ENCODE measurements at regions of chr11 and their contacts with region 1.

Region 1: GRCh38 chr11:35822815-35823495 is 120.9 kb upstream of the LDLRAD3 start:
- DNase-seq: no peak
- H3K4me3 ChIP-seq: no peak overlapping the region
- H3K27ac ChIP-seq: no peak overlapping the region
- H3K4me1 ChIP-seq: peaks cover 8% of the 10 kb centered on the region
- H3K27me3 ChIP-seq: no peaks in the 10 kb centered on the region
- CTCF ChIP-seq: no peak
- POLR2A ChIP-seq: no peak

Region 2: DNA sequence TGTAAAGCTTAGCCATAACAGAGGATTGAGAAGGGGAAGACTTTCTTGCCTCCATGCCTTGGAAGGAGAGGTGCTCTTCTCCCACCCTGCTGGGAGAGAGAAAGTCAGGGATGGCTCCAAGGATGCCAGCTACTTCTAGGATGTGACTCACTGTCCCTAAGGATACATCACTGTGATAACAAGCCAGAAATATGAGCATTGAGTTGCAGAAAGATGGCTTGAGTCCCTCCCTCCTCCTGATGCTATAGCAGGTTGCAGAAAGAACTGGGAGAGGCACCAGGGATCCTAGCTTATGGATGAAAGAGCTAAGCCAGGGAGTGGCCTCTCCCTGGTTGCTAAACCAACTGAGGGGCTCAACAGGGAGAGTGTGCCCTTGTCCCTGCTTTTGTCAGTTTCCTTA is 232.5 kb before region 1 on chr11:
- CTCF ChIA-PET with region 1: no interaction called
- POLR2A ChIA-PET with region 1: no interaction called
- dilution Hi-C with region 1: no loop called
- intact Hi-C with region 1: no loop called
- DNase-seq: no peak
- H3K4me3 ChIP-seq: no peak overlapping the region
- H3K27ac ChIP-seq: no peak overlapping the region
- H3K4me1 ChIP-seq: no peaks in the 10 kb centered on the region
- H3K27me3 ChIP-seq: peaks cover 12 to 16% of the 10 kb centered on the region in 2 experiments
- CTCF ChIP-seq: no peak
- POLR2A ChIP-seq: no peak

Region 3: DNA sequence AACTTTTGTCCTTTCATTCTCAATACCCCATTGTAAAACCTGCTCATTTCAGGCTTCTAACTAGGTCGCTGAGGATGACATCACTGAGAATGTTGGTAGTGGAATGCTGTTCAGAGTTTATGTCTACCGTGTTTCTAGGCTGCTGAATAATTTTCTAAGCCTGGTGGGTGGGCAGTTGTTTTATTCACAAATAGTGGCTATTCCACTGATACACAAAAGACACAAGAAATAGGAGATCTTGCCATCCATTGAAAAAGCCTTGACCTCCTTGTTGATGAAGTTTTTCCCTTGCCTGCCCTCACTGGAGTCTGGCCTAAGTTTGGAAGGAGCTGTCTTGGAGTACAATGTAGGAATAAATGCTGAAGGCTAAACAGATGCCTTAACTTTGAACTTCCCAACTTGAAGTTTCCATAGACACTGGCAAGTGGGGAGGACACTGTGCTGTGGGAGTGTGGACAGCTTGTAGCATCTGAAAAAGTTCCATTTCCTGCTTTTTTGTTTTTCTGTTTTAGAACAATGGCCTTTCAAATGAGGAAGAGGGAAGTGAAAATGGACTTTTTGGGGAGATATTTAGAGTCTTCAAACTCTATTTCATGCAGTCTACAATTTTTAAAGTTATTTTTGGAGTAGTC is 101.2 kb before region 1 on chr11:
- CTCF ChIA-PET with region 1: interaction called, 14 read pairs
- POLR2A ChIA-PET with region 1: no interaction called
- dilution Hi-C with region 1: no loop called
- intact Hi-C with region 1: no loop called
- DNase-seq: no peak
- H3K4me3 ChIP-seq: no peak overlapping the region
- H3K27ac ChIP-seq: no peak overlapping the region
- H3K4me1 ChIP-seq: no peaks in the 10 kb centered on the region
- H3K27me3 ChIP-seq: no peaks in the 10 kb centered on the region
- CTCF ChIP-seq: no peak
- POLR2A ChIP-seq: no peak

Region 4: DNA sequence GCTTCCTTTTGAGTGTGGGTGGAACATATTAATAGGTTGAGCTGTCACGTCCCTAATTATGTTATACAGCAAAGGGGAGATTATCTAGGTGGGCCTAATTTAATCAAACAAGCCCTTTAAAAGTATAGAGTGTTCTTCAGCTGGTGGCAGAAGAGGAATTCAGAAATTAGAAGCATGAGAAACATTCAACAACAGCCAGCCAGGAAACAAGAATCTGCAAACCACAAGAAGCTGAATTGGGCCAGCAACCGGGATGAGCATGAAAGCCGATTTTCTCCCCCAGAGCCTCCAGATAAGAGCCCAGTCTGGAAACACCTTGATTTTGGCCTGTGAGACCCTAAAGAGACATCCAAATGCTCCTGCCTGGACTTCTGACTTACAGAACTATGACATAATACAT is 15.1 kb after region 1 on chr11:
- CTCF ChIA-PET with region 1: interaction called, 78 read pairs
- POLR2A ChIA-PET with region 1: no interaction called
- dilution Hi-C with region 1: no loop called
- intact Hi-C with region 1: loop called (anchors 2 kb)
- DNase-seq: no peak
- H3K4me3 ChIP-seq: no peak overlapping the region
- H3K27ac ChIP-seq: no peak overlapping the region
- H3K4me1 ChIP-seq: peaks cover 7% of the 10 kb centered on the region
- H3K27me3 ChIP-seq: no peaks in the 10 kb centered on the region
- CTCF ChIP-seq: no peak
- POLR2A ChIP-seq: no peak

Region 5: DNA sequence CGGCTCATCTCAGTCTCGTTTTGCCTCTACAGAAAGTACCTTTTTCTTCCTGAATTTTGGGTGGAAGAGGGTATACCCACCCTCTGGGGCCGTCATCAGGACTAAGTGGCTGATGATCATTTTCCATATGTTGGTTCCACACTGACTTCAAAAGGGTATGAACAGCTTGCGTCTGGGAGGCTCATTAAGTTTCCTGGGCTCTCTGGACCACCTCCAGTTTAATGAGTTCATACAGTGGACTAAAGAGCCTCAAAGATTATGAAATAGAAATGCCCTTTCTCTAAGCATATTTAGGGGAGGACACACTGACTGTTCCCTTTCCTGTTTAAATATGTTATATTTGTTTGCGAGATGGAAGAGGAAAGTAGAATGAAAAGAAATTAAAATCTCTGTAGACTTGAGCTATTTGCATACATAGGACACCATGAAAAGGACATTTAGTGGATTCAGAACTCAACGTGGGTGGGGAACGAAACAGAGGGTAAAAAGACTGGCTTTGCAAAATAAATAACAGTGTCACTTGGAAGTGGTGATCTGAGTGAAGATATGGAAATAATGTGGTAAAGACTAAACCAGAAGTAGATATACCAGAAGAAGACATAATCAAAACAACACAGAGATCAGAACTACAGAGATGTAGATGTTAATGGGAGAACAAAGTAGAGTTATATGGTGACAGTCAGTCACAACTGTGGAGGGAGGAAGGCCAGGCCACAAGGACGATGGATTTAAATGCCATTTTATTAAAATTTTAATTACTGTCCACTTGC is 139.6 kb after region 1 on chr11:
- CTCF ChIA-PET with region 1: interaction called, 15 read pairs
- POLR2A ChIA-PET with region 1: no interaction called
- dilution Hi-C with region 1: no loop called
- intact Hi-C with region 1: no loop called
- DNase-seq: no peak
- H3K4me3 ChIP-seq: no peak overlapping the region
- H3K27ac ChIP-seq: no peak overlapping the region
- H3K4me1 ChIP-seq: peaks cover 8% of the 10 kb centered on the region
- H3K27me3 ChIP-seq: no peaks in the 10 kb centered on the region
- CTCF ChIP-seq: no peak
- POLR2A ChIP-seq: no peak

Region 6: DNA sequence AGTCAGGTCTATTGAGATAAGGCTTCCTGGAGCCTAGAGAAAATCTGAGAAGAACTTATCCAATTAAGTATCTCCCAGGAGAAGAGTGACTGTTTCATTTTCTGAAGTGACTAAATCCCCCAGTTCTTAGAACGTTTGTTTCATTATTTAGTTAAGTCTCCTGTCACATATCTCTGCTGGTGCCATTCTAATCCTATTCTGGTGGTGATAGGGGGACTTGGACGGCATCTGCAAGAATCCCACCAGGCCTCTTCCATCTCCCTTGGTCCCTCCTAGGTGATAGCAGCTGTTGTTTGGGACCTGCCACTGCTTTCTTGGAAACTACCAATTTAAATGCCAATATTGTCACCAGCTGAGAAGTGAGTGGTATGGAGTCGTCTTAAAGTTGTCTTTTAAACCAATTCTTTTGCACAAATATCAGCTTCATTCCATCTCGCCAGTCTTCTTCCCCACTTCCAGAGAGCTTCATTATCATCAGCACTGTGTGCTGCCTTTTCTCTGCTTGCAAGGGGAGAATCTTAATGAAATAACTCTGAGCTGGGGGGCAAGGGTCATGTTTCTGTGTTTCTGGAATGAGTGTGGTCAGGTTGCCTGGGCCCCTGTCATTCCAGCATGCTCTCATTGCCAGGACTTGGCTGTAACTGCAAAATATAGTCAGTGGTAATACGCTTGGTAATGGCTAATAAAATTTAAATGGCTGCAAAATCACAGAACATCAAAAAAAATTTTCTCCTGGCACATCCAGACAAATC is 225.7 kb after region 1 on chr11:
- CTCF ChIA-PET with region 1: interaction called, 98 read pairs
- POLR2A ChIA-PET with region 1: no interaction called
- dilution Hi-C with region 1: no loop called
- intact Hi-C with region 1: loop called (anchors 5 kb)
- DNase-seq: no peak
- H3K4me3 ChIP-seq: no peak overlapping the region
- H3K27ac ChIP-seq: no peak overlapping the region
- H3K4me1 ChIP-seq: no peaks in the 10 kb centered on the region
- H3K27me3 ChIP-seq: no peaks in the 10 kb centered on the region
- CTCF ChIP-seq: no peak
- POLR2A ChIP-seq: no peak

Region 7: DNA sequence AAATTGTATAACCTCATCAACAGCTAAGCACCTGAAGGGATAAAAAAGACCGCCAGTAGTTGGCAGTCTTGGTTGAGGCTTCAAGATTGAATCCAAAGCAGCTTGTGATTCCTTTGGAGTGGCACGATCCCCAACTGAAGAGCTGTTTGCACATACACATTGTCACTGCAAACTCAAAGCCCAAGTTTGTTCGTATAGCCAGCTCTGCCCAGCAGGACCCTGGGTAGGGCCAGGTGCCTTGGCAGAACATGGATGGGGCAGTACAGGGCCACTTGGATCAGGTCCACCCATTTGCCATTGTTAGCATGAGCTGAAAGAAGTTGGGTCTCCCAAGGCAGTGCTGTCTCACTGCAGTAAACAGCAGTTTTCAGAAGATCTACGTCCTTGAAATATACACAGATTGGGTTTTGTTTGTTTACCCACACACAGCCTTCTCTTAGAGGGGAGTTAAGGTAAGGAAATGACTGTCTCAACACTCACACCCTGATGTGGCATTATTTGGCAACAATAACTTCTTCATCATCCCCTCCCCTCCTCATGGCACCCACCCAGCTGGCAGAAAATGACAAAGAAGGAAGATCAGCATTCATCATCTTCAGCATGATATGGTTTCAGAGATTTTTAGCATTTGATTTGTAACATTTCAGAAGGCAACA is 333.3 kb after region 1 on chr11:
- CTCF ChIA-PET with region 1: interaction called, 39 read pairs
- POLR2A ChIA-PET with region 1: no interaction called
- dilution Hi-C with region 1: no loop called
- intact Hi-C with region 1: no loop called
- DNase-seq: peak; percentile 70
- H3K4me3 ChIP-seq: no peak overlapping the region
- H3K27ac ChIP-seq: peak overlapping the region; percentile 75
- H3K4me1 ChIP-seq: peaks cover 28% of the 10 kb centered on the region
- H3K27me3 ChIP-seq: no peaks in the 10 kb centered on the region
- CTCF ChIP-seq: no peak
- POLR2A ChIP-seq: no peak

Measured in endothelial cell of umbilical vein (primary cell).